ENCODE measurements at regions of chr4 and their contacts with region 1.

Region 1: GRCh38 chr4:161222889-161223288 is 940.9 kb downstream of the FSTL5 start:
- DNase-seq: no peak
- H3K4me3 ChIP-seq: no peak overlapping the region
- CTCF ChIP-seq: no peak
- POLR2A ChIP-seq: no peak

Region 2: GRCh38 chr4:160675550-160675949 is 547.3 kb before region 1 on chr4:
- intact Hi-C with region 1: no loop called
- DNase-seq: no peak
- H3K4me3 ChIP-seq: no peak overlapping the region
- CTCF ChIP-seq: no peak
- POLR2A ChIP-seq: no peak

Region 3: DNA sequence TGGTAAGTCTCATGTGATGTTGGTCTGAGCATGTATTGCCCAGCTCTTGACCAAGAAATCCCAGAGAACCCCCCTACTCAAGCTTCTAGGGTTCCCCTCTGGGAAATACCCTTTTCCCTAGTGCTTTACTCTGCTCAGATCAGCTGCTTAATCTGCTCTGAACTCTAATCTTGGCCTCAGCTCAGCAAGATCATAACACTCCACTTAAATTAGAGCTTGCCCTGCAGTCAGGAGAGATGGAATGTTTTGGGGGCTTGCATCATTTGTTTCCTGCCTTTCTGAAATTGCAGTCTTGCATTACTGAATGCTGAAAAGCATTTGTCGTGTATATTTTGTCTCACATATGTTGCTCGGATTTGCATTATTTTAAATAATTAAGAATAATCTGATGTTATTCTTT is 212.7 kb before region 1 on chr4:
- intact Hi-C with region 1: no loop called
- DNase-seq: no peak
- H3K4me3 ChIP-seq: no peak overlapping the region
- CTCF ChIP-seq: no peak
- POLR2A ChIP-seq: no peak

Region 4: GRCh38 chr4:162265802-162266201 is 1042.9 kb after region 1 on chr4:
- intact Hi-C with region 1: loop called (anchors 5 kb)
- DNase-seq: no peak
- H3K4me3 ChIP-seq: no peak overlapping the region
- CTCF ChIP-seq: no peak
- POLR2A ChIP-seq: no peak

Measured in lower leg skin (tissue), 4 donors.